Activated CD8-positive, alpha-beta memory T cell treated with anti-CD3 and anti-CD28 coated beads, Interleukin-2, amount 10 ng/mL, durations not matched to agents 7 days and 5 days (primary cell): ENCODE measurements at regions of chr17 and their contacts with region 1.

Region 1: GRCh38 chr17:3835410-3836229 is 10.4 kb downstream of the NCBP3 start:
- DNase-seq: peak; percentile 32
- ATAC-seq: no peak
- H3K4me3 Mint-ChIP-seq: no peak overlapping the region
- H3K27ac Mint-ChIP-seq: no peak overlapping the region
- H3K4me1 Mint-ChIP-seq: peaks cover 13% of the 10 kb centered on the region
- H3K27me3 Mint-ChIP-seq: no peaks in the 10 kb centered on the region

Region 2: DNA sequence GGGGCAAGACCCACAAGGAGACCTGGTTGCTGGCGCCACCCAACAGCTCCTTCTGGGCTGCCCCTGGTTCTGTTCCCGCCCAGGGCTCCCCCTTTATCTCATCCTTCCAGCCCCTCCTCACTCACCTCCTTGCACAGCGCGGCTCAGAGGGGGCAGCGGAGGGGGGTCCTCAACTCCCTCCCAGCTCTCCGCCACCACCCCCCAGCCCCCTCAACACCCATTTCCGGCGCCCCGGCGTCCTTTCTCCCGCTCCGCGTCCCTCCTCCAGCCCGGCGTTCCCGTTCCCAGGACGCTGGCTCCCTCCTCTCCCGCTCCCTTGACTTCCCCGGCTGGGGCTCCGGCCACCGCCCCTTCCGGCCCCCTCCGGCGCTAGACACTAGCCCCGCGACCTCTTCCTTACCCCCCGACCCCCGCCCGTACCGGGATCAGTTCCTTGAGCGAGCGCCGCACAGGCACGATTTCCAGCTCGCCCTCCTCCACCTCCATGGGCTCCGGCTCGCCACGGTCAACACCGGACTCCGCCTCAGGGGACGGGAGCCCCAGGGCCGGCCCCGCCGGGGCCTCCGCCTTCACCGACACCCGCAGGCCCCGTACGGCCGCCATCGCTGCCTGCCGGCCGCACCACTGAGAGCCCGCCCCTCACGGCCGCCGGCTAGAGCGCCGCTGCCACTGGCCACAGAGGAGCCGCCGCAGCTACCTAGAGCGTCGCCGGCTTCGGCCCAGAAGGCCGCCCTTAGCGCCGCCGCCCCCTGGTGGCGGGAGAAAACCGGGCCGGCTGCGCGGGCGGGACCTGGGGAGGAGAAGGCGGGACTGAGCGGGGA is 10.2 kb after region 1 on chr17 and contains the start of gene NCBP3:
- CTCF ChIA-PET with region 1: interaction called, 65 read pairs
- DNase-seq: peak; percentile 92
- ATAC-seq: peak; percentile 95
- H3K4me3 Mint-ChIP-seq: peak within 1 kb of the TSS; percentile 98
- H3K27ac Mint-ChIP-seq: peak within 1 kb of the TSS; percentile 94
- H3K4me1 Mint-ChIP-seq: peaks cover 25% of the 10 kb centered on the region
- H3K27me3 Mint-ChIP-seq: peaks cover 12% of the 10 kb centered on the region
- total RNA-seq, gene NCBP3: 46.3 to 48.7 TPM